SK-N-SH (cell line): ENCODE measurements at regions of chr5 and their contacts with region 1.

Region 1: GRCh38 chr5:133698646-133699526 is 86.5 kb upstream of the FSTL4 start:
- DNase-seq: no peak
- H3K4me3 ChIP-seq: no peak overlapping the region
- H3K27ac ChIP-seq: no peak overlapping the region
- H3K4me1 ChIP-seq: peaks cover 0 to 32% of the 10 kb centered on the region in 2 experiments; a peak in 2 of 4 replicates
- H3K27me3 ChIP-seq: no peaks in the 10 kb centered on the region
- CTCF ChIP-seq: no peak
- EP300 ChIP-seq: no peak
- RAD21 ChIP-seq: no peak

Region 2: GRCh38 chr5:133610489-133611356 is 88.2 kb before region 1 on chr5:
- CTCF ChIA-PET with region 1: interaction called, 17 read pairs
- POLR2A ChIA-PET with region 1: interaction called, 3 read pairs
- DNase-seq: peak; percentile 87
- H3K4me3 ChIP-seq: peak overlapping the region; percentile 26 to 35; a peak in 3 of 4 replicates
- H3K27ac ChIP-seq: no peak overlapping the region
- H3K4me1 ChIP-seq: peaks cover 0 to 29% of the 10 kb centered on the region in 2 experiments; a peak in 2 of 4 replicates
- H3K27me3 ChIP-seq: peaks cover 37% of the 10 kb centered on the region
- CTCF ChIP-seq: peak; percentile 45
- EP300 ChIP-seq: no peak
- RAD21 ChIP-seq: peak; percentile 71

Region 3: DNA sequence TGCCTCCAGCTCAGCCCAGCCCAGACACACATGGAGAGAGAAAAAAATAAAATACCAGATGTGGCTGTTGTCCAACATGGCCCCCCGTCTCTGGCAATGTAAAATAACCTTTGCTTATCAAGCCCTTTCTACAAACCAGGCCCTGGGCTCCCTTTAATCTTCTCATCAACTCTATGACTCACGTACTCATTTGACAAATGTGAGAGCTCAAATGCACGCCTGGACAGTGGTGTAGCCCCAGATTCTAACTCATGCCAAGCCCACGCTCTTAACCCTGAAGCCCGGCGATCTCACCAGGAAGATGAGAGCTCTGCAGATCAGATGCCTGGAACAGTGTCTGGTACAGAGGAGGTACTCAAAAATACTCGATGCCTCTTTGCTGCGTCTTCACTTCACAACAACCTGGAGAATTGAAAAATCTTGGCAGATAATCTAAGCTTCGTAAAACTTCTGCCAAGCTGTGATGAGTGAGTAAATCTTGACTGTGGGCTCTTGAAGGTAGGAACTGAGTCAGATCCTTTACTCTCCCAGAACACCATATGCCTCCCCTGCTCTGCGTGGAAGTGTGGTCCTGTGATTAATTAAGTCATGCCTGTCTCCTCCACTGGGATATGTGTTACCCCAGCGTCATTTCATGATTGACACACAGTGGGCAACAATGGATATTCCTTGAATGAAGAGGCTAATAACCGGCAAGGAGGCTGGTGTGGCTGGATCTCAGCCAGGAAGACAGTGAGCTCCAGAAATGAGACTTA is 15.5 kb after region 1 on chr5:
- CTCF ChIA-PET with region 1: interaction called, 26 read pairs
- POLR2A ChIA-PET with region 1: interaction called, 3 read pairs
- DNase-seq: peak; percentile 74
- H3K4me3 ChIP-seq: no peak overlapping the region
- H3K27ac ChIP-seq: peak overlapping the region in 1 of 2 experiments; percentile 96; a peak in 2 of 4 replicates
- H3K4me1 ChIP-seq: peaks cover 0 to 45% of the 10 kb centered on the region in 2 experiments; a peak in 2 of 4 replicates
- H3K27me3 ChIP-seq: no peaks in the 10 kb centered on the region
- CTCF ChIP-seq: no peak
- EP300 ChIP-seq: peak in 1 of 2 experiments; percentile 96; a peak in 2 of 4 replicates
- RAD21 ChIP-seq: peak; percentile 43

Region 4: DNA sequence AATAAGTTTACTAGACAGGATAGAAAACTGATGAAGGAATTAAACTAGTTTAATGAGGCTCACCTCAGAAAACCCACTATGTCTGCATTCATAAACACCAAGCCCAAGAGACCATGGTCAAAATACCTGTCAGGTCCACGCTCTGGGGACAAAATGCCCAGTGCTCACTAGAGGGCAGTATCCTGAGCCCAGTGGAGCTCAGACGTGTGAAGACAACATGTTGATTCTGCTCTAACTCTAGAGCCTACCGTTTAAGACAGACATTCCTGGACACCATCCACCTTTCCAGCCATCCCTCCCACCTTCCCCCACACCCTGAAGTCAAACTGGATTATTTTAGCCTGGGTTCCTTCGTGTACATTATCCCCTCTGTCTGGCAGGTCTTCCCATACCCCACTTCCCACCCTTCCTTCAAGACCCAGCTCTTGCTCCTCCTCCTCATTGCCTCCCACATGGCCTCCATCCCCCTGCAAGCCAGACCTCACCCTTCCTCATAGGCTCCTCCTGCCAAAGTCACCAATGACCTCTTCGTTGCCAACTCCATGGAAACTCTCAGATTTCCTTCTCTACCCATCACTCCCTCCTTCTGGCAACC is 55.8 kb after region 1 on chr5:
- CTCF ChIA-PET with region 1: no interaction called
- POLR2A ChIA-PET with region 1: no interaction called
- DNase-seq: no peak
- H3K4me3 ChIP-seq: no peak overlapping the region
- H3K27ac ChIP-seq: no peak overlapping the region
- H3K4me1 ChIP-seq: peaks cover 0 to 10% of the 10 kb centered on the region in 2 experiments; a peak in 1 of 4 replicates
- H3K27me3 ChIP-seq: peaks cover 5% of the 10 kb centered on the region; the same call in 1 of the 2 replicates
- CTCF ChIP-seq: peak; percentile 56
- EP300 ChIP-seq: no peak
- RAD21 ChIP-seq: peak; percentile 49